ENCODE measurements at regions of chr1 and their contacts with region 1.

Region 1: GRCh38 chr1:205255941-205256780 is 28.4 kb downstream of the TMCC2 start:
- DNase-seq: no peak
- H3K4me3 ChIP-seq: no peak overlapping the region
- H3K27ac ChIP-seq: no peak overlapping the region
- H3K4me1 ChIP-seq: peaks cover 15% of the 10 kb centered on the region
- H3K27me3 ChIP-seq: no peaks in the 10 kb centered on the region
- CTCF ChIP-seq: peak; percentile 78 to 99 (median 97)
- POLR2A ChIP-seq: no peak

Region 2: DNA sequence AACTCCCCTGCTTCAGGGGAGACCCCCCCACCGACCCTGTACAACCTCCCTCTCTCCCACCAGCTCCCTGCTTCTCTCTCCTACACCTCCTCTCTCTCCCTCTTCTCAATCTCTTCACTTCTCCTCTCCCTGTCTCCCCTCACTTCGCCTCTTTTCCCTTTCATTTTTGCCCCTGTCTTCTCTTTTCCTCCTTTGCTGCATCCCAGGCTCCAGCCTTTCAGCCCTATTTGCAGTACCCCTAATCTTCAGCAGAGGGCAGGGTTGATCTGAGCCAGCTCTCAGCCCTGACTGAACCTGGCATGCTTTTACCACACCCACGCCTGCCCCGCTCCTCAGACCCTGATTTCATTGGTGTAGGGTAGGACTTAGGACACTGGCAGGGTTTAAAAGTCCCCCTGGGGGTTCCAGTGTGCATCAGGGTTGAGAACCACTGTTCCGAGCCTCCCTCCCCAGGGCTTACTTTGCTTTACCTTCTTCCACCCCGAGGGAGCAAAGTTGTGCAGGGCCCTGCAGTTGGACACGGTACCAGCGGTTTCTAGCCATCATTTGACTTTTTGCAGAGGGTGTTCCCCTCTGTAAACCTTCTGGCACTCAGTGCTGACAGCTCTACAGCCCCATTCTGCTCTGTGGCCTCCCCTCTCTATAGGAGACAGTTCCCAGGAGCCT is 280.5 kb before region 1 on chr1:
- intact Hi-C with region 1: loop called (anchors 10 kb)
- DNase-seq: no peak
- H3K4me3 ChIP-seq: no peak overlapping the region
- H3K27ac ChIP-seq: no peak overlapping the region
- H3K4me1 ChIP-seq: no peaks in the 10 kb centered on the region
- H3K27me3 ChIP-seq: no peaks in the 10 kb centered on the region
- CTCF ChIP-seq: peak; percentile 59 to 76 (median 61)
- POLR2A ChIP-seq: no peak

Region 3: DNA sequence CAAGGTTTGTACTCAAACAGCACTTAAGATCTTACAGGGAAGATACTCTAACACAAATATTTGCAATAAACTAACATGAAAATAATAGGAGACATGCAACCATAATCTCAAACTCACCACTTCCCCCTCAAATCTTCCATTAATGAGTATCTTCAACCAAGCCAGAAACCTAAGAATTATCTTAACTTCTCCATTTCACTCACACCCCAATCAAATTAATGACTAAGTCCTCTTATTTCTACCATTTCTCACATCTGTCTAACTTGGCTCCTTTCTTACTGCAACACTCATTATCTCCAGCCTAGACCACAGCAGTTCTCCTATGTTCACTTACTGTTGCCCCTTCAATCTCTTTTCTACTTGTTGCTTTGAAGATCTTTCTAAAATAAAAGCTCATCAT is 144.8 kb before region 1 on chr1:
- intact Hi-C with region 1: loop called (anchors 10 kb)
- DNase-seq: no peak
- H3K4me3 ChIP-seq: no peak overlapping the region
- H3K27ac ChIP-seq: no peak overlapping the region
- H3K4me1 ChIP-seq: no peaks in the 10 kb centered on the region
- H3K27me3 ChIP-seq: no peaks in the 10 kb centered on the region
- CTCF ChIP-seq: no peak
- POLR2A ChIP-seq: no peak